Spleen (tissue), 13 donors: ENCODE measurements at regions of chr19 and their contacts with region 1.

Region 1: GRCh38 chr19:2648528-2648937 is 54.0 kb downstream of the GNG7 start:
- DNase-seq: peak; percentile 89
- H3K4me3 ChIP-seq: no peak overlapping the region
- H3K27ac ChIP-seq: peak overlapping the region in 1 of 8 donors; percentile 21
- H3K4me1 ChIP-seq: peaks cover 0 to 50% (median 17%) of the 10 kb centered on the region in 6 donors
- H3K27me3 ChIP-seq: no peaks in the 10 kb centered on the region
- CTCF ChIP-seq: peak; percentile 75 to 98 (median 89)
- POLR2A ChIP-seq: no peak

Region 2: GRCh38 chr19:2552859-2553258 is 95.7 kb before region 1 on chr19:
- intact Hi-C with region 1: no loop called
- DNase-seq: peak; percentile 41
- H3K4me3 ChIP-seq: peak overlapping the region in 6 of 8 donors; percentile 2 to 46 (median 10)
- H3K27ac ChIP-seq: peak overlapping the region; percentile 47 to 84 (median 74)
- H3K4me1 ChIP-seq: peaks cover 5 to 88% (median 43%) of the 10 kb centered on the region in 6 donors
- H3K27me3 ChIP-seq: no peaks in the 10 kb centered on the region
- CTCF ChIP-seq: no peak
- POLR2A ChIP-seq: no peak

Region 3: GRCh38 chr19:2750808-2751443 is 102.4 kb after region 1 on chr19:
- intact Hi-C with region 1: loop called (anchors 2 kb)
- DNase-seq: peak; percentile 58
- H3K4me3 ChIP-seq: no peak overlapping the region
- H3K27ac ChIP-seq: no peak overlapping the region
- H3K4me1 ChIP-seq: peaks cover 0 to 22% (median 8%) of the 10 kb centered on the region in 6 donors
- H3K27me3 ChIP-seq: no peaks in the 10 kb centered on the region
- CTCF ChIP-seq: no peak
- POLR2A ChIP-seq: no peak

Region 4: GRCh38 chr19:2869618-2870017 is 221.1 kb after region 1 on chr19:
- intact Hi-C with region 1: loop called (anchors 5 kb)
- DNase-seq: no peak
- H3K4me3 ChIP-seq: no peak overlapping the region
- H3K27ac ChIP-seq: no peak overlapping the region
- H3K4me1 ChIP-seq: no peaks in the 10 kb centered on the region
- H3K27me3 ChIP-seq: no peaks in the 10 kb centered on the region
- CTCF ChIP-seq: no peak
- POLR2A ChIP-seq: no peak

Region 5: GRCh38 chr19:2986951-2987524 is 338.5 kb after region 1 on chr19:
- intact Hi-C with region 1: no loop called
- DNase-seq: no peak
- H3K4me3 ChIP-seq: no peak overlapping the region
- H3K27ac ChIP-seq: no peak overlapping the region
- H3K4me1 ChIP-seq: peaks cover 6 to 25% (median 18%) of the 10 kb centered on the region in 6 donors
- H3K27me3 ChIP-seq: peaks cover 0 to 41% (median 4%) of the 10 kb centered on the region in 7 donors
- CTCF ChIP-seq: no peak
- POLR2A ChIP-seq: no peak